ENCODE measurements at regions of chr5 and their contacts with region 1.

Region 1: DNA sequence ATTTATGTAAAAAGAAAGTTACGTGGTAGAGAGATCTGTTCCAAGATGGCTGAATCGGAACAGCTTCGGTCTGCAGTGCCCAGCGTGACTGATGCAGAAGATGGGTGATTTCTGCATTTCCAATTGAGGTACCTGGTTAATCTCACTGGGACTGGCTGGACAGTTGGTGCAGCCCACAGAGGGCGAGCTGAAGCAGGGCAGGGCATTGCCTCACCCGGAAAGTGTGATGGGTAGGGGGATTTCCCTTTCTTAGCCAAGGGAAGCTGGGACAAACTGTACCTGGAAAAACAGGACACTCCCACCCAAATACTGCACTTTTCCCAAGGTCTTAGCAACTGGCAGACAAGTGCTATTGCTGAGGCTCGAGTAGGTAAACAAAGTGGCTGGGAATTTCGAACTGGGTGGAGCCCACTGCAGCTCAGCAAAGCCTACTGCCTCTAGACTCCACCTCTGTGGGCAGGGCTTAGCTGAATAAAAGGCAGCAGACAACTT is 13.1 kb upstream of the HSD17B4 start:
- DNase-seq: no peak
- H3K4me3 ChIP-seq: no peak overlapping the region
- H3K4me3 Mint-ChIP-seq: no peak overlapping the region
- H3K27ac Mint-ChIP-seq: no peak overlapping the region
- H3K4me1 ChIP-seq: no peaks in the 10 kb centered on the region
- H3K4me1 Mint-ChIP-seq: peaks cover 14% of the 10 kb centered on the region
- H3K27me3 ChIP-seq: no peaks in the 10 kb centered on the region
- H3K27me3 Mint-ChIP-seq: peaks cover 3% of the 10 kb centered on the region
- CTCF ChIP-seq: no peak

Region 2: GRCh38 chr5:119452373-119453039 is 13.3 kb after region 1 on chr5 and contains the start of gene HSD17B4:
- CTCF ChIA-PET with region 1: no interaction called
- POLR2A ChIA-PET with region 1: no interaction called
- intact Hi-C with region 1: loop called (anchors 1 kb)
- DNase-seq: peak; percentile 91 to 95
- H3K4me3 ChIP-seq: peak within 1 kb of the TSS; percentile 62
- H3K4me3 Mint-ChIP-seq: peak within 1 kb of the TSS; percentile 96
- H3K27ac Mint-ChIP-seq: peak within 1 kb of the TSS; percentile 97
- H3K4me1 ChIP-seq: peaks cover 12% of the 10 kb centered on the region
- H3K4me1 Mint-ChIP-seq: peaks cover 7% of the 10 kb centered on the region
- H3K27me3 ChIP-seq: no peaks in the 10 kb centered on the region
- H3K27me3 Mint-ChIP-seq: no peaks in the 10 kb centered on the region
- CTCF ChIP-seq: no peak
- total RNA-seq, gene HSD17B4: 172 and 175 TPM in 2 replicates

Region 3: GRCh38 chr5:119631660-119632059 is 192.5 kb after region 1 on chr5:
- CTCF ChIA-PET with region 1: no interaction called
- POLR2A ChIA-PET with region 1: no interaction called
- intact Hi-C with region 1: no loop called
- DNase-seq: no peak
- H3K4me3 ChIP-seq: no peak overlapping the region
- H3K4me3 Mint-ChIP-seq: no peak overlapping the region
- H3K27ac Mint-ChIP-seq: no peak overlapping the region
- H3K4me1 ChIP-seq: no peaks in the 10 kb centered on the region
- H3K4me1 Mint-ChIP-seq: no peaks in the 10 kb centered on the region
- H3K27me3 ChIP-seq: no peaks in the 10 kb centered on the region
- H3K27me3 Mint-ChIP-seq: no peaks in the 10 kb centered on the region
- CTCF ChIP-seq: no peak